Activated CD4-positive, alpha-beta T cell treated with anti-CD3 and anti-CD28 coated beads for 36 hours (primary cell): ENCODE measurements at regions of chr6 and their contacts with region 1.

Region 1: DNA sequence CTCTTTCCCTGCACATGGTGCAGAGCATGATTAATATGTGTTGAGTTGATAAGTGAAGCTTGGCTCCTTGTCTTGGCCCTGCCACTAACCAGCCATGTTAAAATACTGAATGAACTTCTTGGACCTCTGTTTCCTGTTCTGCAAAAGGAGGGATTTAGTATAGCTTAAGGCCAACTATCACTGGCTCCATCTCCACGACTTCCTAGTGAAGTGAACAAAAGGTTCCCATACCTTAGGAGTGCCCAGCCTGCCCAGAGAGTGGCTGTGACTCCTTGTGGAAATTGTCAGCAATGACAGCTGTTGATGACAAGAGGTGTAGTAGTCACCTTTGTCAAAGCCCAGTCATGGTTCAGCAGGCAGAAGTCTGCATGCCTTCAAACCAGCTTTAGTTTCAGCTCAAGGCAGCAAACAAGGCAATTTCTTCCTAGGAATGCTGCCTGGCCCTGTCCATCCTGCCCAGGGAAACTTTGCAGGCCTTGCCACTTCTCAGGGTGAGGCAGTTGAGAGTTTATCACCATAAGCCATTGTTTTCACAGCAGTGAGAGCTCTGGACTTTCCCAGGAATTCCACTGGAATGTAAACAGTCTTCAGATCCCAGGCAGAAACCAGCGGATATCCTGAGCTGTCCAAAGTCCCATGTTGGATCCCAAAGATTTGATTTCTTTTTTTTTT is 169.7 kb upstream of the TNFAIP3 start:
- DNase-seq: peak; percentile 46
- ATAC-seq: peak; percentile 43
- H3K4me3 Mint-ChIP-seq: no peak overlapping the region
- H3K27ac Mint-ChIP-seq: peak overlapping the region; percentile 60
- H3K4me1 Mint-ChIP-seq: peaks cover 47% of the 10 kb centered on the region
- H3K27me3 Mint-ChIP-seq: peaks cover 7% of the 10 kb centered on the region

Region 2: DNA sequence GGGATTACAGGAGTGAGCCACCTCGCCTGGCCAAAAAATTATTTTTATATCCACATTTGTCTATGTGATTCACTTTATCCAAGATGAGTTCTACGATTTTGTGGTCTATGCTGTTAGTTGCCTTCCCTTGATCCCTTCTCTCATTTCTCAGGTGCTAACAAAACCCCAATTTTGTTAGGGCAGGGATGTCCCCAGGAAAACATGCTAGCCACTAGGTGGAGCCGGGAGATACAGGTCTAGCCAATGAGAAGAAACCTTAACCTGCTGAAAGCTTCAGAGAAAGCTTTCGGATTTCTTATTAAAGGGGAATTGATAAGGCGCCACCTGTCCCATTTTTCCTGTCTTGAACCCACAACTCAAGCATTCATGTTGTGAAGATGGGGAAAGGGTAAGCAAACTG is 35.8 kb before region 1 on chr6:
- CTCF ChIA-PET with region 1: interaction called, 8 read pairs
- POLR2A ChIA-PET with region 1: interaction called, 5 read pairs
- intact Hi-C with region 1: loop called in 1 of 2 experiments (anchors 1 kb)
- DNase-seq: peak; percentile 64
- ATAC-seq: peak; percentile 37
- H3K4me3 Mint-ChIP-seq: no peak overlapping the region
- H3K27ac Mint-ChIP-seq: no peak overlapping the region
- H3K4me1 Mint-ChIP-seq: peaks cover 25% of the 10 kb centered on the region
- H3K27me3 Mint-ChIP-seq: peaks cover 9% of the 10 kb centered on the region

Region 3: GRCh38 chr6:137680705-137681346 is 16.6 kb before region 1 on chr6:
- CTCF ChIA-PET with region 1: interaction called, 35 read pairs
- POLR2A ChIA-PET with region 1: interaction called, 12 read pairs
- intact Hi-C with region 1: loop called (anchors 1 kb)
- DNase-seq: no peak
- ATAC-seq: peak; percentile 62
- H3K4me3 Mint-ChIP-seq: peak overlapping the region; percentile 2
- H3K27ac Mint-ChIP-seq: peak overlapping the region; percentile 67
- H3K4me1 Mint-ChIP-seq: peaks cover 53% of the 10 kb centered on the region
- H3K27me3 Mint-ChIP-seq: peaks cover 12% of the 10 kb centered on the region

Region 4: GRCh38 chr6:138007014-138007472 is 309.6 kb after region 1 on chr6:
- CTCF ChIA-PET with region 1: interaction called, 14 read pairs
- POLR2A ChIA-PET with region 1: no interaction called
- intact Hi-C with region 1: no loop called
- DNase-seq: peak; percentile 65
- ATAC-seq: peak; percentile 66
- H3K4me3 Mint-ChIP-seq: no peak overlapping the region
- H3K27ac Mint-ChIP-seq: no peak overlapping the region
- H3K4me1 Mint-ChIP-seq: peaks cover 13% of the 10 kb centered on the region
- H3K27me3 Mint-ChIP-seq: no peaks in the 10 kb centered on the region